ENCODE measurements at regions of chr9 and their contacts with region 1.

Region 1: DNA sequence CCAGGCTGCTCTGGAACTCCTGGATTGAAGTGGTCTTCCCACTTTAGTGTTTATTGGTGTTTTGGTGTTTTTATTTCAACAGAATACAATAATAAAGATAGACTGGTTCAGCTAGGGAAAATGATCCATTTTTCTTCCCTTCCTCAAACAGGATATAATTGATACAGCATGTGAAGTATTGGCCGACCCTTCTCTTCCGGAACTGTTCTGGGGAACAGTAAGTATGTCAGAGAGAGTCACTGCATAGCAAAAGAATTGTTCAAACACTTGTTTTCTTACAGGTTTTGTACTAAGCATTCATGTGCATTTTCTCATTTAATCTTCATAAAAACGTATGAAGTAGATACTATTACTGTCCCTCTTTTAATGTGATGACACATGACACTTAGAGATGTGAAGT is 31.6 kb downstream of the NUP188 start:
- DNase-seq: no peak
- ATAC-seq: no peak
- H3K4me3 ChIP-seq: no peak overlapping the region
- H3K27ac ChIP-seq: no peak overlapping the region
- H3K4me1 ChIP-seq: no peaks in the 10 kb centered on the region
- CTCF ChIP-seq: no peak
- EP300 ChIP-seq: no peak
- POLR2A ChIP-seq: no peak
- RAD21 ChIP-seq: no peak

Region 2: GRCh38 chr9:128399861-128400260 is 579.2 kb before region 1 on chr9:
- CTCF ChIA-PET with region 1: no interaction called
- POLR2A ChIA-PET with region 1: interaction called, 10 read pairs
- DNase-seq: no peak
- ATAC-seq: peak in 1 of 2 experiments; percentile 19; a peak in 2 of 6 replicates
- H3K4me3 ChIP-seq: no peak overlapping the region
- H3K27ac ChIP-seq: no peak overlapping the region
- H3K4me1 ChIP-seq: no peaks in the 10 kb centered on the region
- CTCF ChIP-seq: no peak
- EP300 ChIP-seq: no peak
- POLR2A ChIP-seq: no peak
- RAD21 ChIP-seq: no peak

Region 3: GRCh38 chr9:129042016-129042415 is 62.9 kb after region 1 on chr9:
- CTCF ChIA-PET with region 1: no interaction called
- POLR2A ChIA-PET with region 1: no interaction called
- DNase-seq: no peak
- ATAC-seq: no peak
- H3K4me3 ChIP-seq: no peak overlapping the region
- H3K27ac ChIP-seq: no peak overlapping the region
- H3K4me1 ChIP-seq: peaks cover 9% of the 10 kb centered on the region; the same call in 1 of the 3 replicates
- CTCF ChIP-seq: no peak
- EP300 ChIP-seq: no peak
- POLR2A ChIP-seq: no peak
- RAD21 ChIP-seq: no peak